ENCODE measurements at regions of chr7 and their contacts with region 1.

Region 1: DNA sequence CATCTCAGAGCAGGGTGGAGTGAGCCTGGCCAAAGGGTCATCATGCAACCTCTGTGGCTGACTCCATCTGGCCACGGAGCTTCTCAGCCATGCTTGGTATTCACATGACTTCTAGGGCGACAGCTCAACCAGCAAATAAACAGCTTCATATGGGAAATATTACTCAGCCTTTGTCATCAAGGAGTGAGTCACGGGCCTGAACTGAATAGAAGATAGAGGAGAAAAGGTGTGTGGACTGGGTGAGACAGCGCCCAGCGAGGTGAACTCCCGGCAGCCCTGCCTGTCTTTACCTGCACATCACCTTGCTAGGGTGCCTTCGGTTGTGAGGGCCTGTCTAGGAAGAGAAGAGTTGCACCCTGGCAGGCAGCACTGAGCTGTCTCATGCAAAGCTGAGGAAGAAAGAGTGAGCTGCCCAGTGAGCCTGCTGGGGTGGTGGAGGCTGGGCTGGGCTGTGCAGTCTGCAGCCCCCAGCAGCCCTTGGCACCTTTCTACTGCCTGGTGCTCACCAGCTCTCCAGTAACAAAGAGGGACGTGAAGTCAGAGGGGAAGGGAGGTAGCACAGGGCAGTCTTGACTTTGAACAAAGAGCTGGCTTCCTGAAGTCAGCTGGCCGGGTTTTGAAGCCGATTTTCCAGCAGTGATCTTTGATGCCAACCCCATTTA is 114.2 kb downstream of the EGFR start:
- DNase-seq: peak; percentile 83
- H3K4me3 ChIP-seq: no peak overlapping the region
- H3K27ac ChIP-seq: peak overlapping the region; percentile 81 to 90 (median 87)
- H3K4me1 ChIP-seq: peaks cover 0 to 64% (median 61%) of the 10 kb centered on the region in 4 donors
- H3K27me3 ChIP-seq: no peaks in the 10 kb centered on the region
- CTCF ChIP-seq: no peak
- EP300 ChIP-seq: peak in 2 of 4 donors; percentile 36 to 80
- POLR2A ChIP-seq: no peak

Region 2: DNA sequence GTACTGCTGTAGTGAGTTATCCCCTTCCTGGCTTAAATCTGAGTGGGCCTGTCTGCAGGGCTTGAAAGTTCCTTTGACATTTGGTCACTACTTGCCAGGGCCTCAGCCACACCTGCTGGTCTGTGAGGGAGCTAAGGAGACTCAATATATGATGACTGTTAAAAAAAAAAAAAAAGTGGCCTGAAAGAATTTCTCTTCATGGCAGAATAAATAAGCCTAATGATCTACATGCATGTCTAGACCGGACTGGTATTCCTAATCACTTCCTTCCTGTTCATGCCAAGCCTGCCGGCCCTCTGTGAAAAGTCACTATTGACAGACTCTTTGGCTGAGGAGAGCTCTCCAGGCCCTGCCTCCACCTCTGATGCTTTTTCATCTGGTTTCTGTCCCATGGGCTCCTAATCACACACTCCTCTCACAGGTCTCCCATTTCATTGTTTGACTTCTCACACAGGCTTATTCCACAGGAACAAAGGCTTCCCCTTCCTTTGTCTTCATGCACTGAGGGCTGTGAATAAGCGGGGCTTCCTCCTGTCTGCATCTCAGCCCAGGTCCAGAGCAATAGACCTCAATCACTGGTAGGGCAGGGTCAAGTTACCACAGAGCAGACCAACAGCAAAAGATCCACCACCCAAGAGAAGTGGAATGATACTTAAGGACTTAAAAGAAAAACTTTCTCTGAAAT is 274.9 kb before region 1 on chr7:
- intact Hi-C with region 1: no loop called
- DNase-seq: no peak
- H3K4me3 ChIP-seq: no peak overlapping the region
- H3K27ac ChIP-seq: no peak overlapping the region
- H3K4me1 ChIP-seq: no peaks in the 10 kb centered on the region
- H3K27me3 ChIP-seq: no peaks in the 10 kb centered on the region
- CTCF ChIP-seq: no peak
- EP300 ChIP-seq: no peak
- POLR2A ChIP-seq: no peak

Region 3: GRCh38 chr7:55073945-55074499 is 59.0 kb before region 1 on chr7:
- intact Hi-C with region 1: loop called (anchors 5 kb)
- DNase-seq: peak; percentile 81
- H3K4me3 ChIP-seq: peak overlapping the region in 3 of 4 donors; percentile 2 to 32 (median 23)
- H3K27ac ChIP-seq: peak overlapping the region; percentile 75 to 86 (median 80)
- H3K4me1 ChIP-seq: peaks cover 0 to 86% (median 66%) of the 10 kb centered on the region in 4 donors
- H3K27me3 ChIP-seq: no peaks in the 10 kb centered on the region
- CTCF ChIP-seq: no peak
- EP300 ChIP-seq: peak in 1 of 4 donors; percentile 3
- POLR2A ChIP-seq: no peak